GM10248 (cell line): ENCODE measurements at regions of chr7 and their contacts with region 1.

Region 1: DNA sequence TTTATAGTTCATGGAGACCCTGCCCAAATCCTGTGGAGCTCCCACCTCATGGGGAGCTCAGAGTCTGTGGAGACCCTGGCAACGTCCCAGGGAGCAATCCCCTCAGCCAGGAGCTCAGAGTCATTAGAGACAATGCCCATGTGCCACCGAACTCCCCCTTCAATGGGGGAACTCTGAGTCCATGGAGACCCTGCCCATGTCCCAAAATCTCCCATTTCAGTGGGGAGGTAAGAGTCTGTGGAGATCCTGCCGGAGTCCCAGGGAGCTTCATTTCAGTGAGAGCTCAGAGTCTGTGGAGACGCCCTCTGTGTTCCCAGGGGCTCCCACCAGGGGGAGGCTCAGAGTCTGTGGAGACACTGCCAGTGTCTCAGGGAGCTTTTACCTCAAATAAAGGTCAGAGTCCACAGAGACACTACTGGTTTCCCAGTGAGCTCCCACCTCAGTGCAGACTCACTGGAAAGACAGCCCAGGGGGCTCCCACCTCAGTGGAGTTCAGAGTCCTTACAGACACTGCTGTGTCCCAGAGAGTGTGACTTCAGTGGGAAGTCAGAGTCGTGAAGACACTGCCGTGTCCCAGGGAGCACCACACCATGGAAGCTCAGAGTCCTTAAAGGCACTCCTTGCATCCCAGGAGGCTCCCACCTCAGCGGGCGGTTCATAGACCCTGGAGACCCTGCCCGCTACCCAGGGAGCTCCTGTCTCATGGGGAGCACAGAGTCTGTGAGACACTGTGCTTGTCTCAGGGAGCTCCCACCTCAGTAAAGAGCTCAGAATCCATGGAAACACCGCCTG is 5.0 kb downstream of the MYO1G start:
- DNase-seq: no peak
- CTCF ChIP-seq: peak; percentile 38

Region 2: GRCh38 chr7:44858161-44858560 is 115.6 kb before region 1 on chr7:
- CTCF ChIA-PET with region 1: interaction called, 14 read pairs
- POLR2A ChIA-PET with region 1: no interaction called
- DNase-seq: no peak
- CTCF ChIP-seq: no peak

Region 3: GRCh38 chr7:44962483-44963251 is 11.1 kb before region 1 on chr7:
- CTCF ChIA-PET with region 1: interaction called, 17 read pairs
- POLR2A ChIA-PET with region 1: interaction called, 9 read pairs
- DNase-seq: no peak
- CTCF ChIP-seq: no peak

Region 4: DNA sequence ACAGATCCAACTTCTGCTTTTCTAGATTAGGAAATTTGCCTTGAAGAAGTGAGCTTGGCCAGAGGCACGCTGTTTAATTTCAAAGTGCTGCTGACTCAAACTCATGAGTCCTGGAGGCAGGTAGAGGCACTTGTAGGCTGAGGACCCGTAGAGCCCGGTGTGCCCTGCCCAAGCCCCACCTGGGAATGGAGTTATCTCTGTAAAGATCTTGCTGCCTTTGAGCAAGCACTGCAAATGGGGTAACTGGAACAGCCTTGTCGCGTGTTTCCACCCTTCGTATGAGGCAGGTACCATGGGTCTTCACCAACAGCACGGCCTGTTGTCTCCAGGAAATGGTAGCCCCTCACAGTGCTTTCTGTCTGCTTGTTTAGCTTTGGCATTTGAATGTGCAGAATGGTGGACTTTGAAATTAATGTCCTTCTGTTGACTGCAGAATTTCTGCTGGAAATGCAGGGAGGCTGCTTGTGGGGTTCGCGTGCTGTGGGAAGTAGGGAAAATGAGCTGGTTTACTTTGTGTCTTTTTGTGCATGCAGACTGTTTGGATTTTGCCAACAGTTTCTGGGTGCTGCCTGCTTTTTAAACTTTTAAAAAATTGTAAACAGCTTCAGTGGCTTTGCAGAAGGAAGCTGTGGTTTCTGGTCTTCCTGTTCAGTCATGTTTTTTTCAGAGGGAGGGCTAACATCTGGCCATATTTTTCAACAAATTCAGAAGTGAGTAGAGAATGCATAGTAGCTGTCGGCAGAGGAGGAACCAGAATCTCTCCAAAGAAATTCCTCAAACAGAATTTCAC is 53.4 kb after region 1 on chr7:
- CTCF ChIA-PET with region 1: interaction called, 14 read pairs
- POLR2A ChIA-PET with region 1: no interaction called
- DNase-seq: peak; percentile 50
- CTCF ChIP-seq: no peak